CD14-positive monocyte (primary cell): ENCODE measurements at regions of chr9 and their contacts with region 1.

Region 1: GRCh38 chr9:36632892-36633291 is 60.2 kb downstream of the MELK start:
- DNase-seq: no peak
- H3K4me3 ChIP-seq: no peak overlapping the region
- H3K4me3 Mint-ChIP-seq: no peak overlapping the region
- H3K27ac ChIP-seq: no peak overlapping the region
- H3K27ac Mint-ChIP-seq: no peak overlapping the region
- H3K4me1 ChIP-seq: no peaks in the 10 kb centered on the region
- H3K4me1 Mint-ChIP-seq: no peaks in the 10 kb centered on the region
- H3K27me3 ChIP-seq: no peaks in the 10 kb centered on the region
- H3K27me3 Mint-ChIP-seq: peaks cover 0 to 1% (median 0%) of the 10 kb centered on the region in 3 donors
- CTCF ChIP-seq: peak; percentile 43

Region 2: DNA sequence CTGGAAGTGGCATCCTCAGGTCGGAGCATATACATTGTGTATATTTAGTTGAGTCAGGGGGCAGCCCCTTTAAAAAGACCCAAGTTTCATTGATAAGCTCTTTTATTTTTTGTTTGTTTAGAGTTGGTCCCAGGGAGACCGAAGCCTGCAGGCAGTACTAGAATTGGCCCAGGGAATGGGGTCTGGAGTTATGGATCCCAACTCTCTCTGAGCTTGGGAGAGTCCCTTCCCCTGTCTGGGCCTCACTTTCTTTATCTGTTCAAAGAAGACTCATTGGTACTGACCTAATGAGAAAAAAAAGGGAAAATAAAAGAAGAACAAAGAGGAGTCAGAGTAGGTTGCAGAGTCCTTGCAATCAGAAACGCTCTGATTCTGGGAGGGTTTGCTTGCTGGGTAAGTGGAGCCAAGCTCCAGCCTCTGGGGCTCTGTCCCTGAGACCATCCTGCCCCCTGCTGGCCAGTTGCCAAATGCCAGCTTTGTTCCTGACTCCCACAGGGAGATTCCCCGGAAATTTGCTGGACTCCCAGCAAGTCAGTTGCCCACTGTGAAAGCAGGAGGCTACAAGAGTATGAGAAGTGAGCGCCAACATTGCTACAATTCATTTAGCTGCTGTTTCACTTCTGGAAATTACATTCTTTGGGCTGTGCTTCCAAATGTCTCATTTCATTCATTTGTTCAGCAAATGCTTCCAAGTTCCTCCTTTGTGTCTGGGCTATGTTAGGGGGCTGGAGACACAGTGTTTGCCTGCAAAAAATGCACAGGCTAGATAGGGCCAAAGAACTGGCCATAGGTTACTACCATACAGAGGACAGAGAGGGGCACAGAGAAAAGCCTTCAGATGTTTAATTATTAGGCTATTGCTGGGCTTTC is 96.0 kb after region 1 on chr9:
- intact Hi-C with region 1: loop called in 1 of 2 experiments (anchors 5 kb)
- DNase-seq: peak; percentile 19 to 70 (median 41)
- H3K4me3 ChIP-seq: no peak overlapping the region
- H3K4me3 Mint-ChIP-seq: no peak overlapping the region
- H3K27ac ChIP-seq: no peak overlapping the region
- H3K27ac Mint-ChIP-seq: no peak overlapping the region
- H3K4me1 ChIP-seq: peaks cover 5 to 7% of the 10 kb centered on the region in 2 donors
- H3K4me1 Mint-ChIP-seq: peaks cover 7% of the 10 kb centered on the region
- H3K27me3 ChIP-seq: no peaks in the 10 kb centered on the region
- H3K27me3 Mint-ChIP-seq: peaks cover 0 to 2% (median 0%) of the 10 kb centered on the region in 3 donors
- CTCF ChIP-seq: peak; percentile 82